Activated CD4-positive, alpha-beta T cell treated with anti-CD3 and anti-CD28 coated beads, Interleukin-2, amount 10 ng/mL, durations not matched to agents 24 days and 14 days (primary cell): ENCODE measurements at regions of chr14 and their contacts with region 1.

Region 1: DNA sequence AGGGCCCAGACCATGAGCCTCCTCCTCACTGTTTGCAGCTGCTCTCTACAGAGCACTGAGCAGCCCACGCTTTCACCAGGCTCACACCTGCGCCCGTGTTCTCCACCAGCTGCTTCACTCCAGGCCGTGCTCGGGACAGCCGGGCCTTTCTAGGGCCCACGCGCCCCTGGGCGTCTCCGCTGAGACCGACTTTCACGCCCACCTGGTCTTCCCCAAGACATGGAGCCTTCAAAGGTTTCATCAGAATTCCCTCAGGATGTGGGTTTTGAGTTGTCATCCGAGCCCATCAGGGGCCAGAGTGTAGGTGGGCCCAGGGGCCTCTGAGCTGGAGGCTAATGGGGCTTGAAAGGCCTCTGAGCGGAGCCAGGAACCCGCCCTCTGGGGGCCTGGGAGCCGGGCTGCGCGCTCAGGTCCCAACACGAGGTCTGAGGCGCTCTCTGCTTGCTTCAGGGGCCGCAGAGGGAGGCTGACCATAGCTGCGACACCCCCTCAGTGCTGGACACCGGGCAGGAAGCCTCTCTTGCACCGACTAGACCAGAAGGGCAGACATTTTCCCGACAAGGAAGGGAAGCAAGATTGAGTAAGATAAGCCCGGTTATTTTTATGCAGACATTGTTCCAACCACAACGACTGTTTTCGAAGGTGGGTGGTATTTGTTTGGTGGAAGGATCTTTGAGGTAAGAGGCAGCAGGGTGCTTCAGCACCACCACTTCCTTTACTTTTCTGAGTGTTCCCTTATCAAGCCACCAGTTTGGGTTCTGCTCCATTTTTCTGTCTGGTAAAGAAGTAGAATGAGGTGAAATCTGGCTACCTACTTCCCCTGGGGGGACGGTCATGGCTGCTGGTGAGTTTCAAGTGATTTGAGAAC is 125.0 kb upstream of the FUT8 start:
- DNase-seq: peak; percentile 89
- H3K4me3 Mint-ChIP-seq: peak overlapping the region; percentile 78
- H3K27ac Mint-ChIP-seq: peak overlapping the region; percentile 98
- H3K4me1 Mint-ChIP-seq: peaks cover 66% of the 10 kb centered on the region
- H3K27me3 Mint-ChIP-seq: no peaks in the 10 kb centered on the region

Region 2: GRCh38 chr14:65170768-65171507 is 116.6 kb before region 1 on chr14:
- intact Hi-C with region 1: loop called (anchors 1 kb)
- DNase-seq: peak; percentile 88
- H3K4me3 Mint-ChIP-seq: peak overlapping the region; percentile 78
- H3K27ac Mint-ChIP-seq: peak overlapping the region; percentile 82
- H3K4me1 Mint-ChIP-seq: peaks cover 36% of the 10 kb centered on the region
- H3K27me3 Mint-ChIP-seq: peaks cover 3% of the 10 kb centered on the region

Region 3: DNA sequence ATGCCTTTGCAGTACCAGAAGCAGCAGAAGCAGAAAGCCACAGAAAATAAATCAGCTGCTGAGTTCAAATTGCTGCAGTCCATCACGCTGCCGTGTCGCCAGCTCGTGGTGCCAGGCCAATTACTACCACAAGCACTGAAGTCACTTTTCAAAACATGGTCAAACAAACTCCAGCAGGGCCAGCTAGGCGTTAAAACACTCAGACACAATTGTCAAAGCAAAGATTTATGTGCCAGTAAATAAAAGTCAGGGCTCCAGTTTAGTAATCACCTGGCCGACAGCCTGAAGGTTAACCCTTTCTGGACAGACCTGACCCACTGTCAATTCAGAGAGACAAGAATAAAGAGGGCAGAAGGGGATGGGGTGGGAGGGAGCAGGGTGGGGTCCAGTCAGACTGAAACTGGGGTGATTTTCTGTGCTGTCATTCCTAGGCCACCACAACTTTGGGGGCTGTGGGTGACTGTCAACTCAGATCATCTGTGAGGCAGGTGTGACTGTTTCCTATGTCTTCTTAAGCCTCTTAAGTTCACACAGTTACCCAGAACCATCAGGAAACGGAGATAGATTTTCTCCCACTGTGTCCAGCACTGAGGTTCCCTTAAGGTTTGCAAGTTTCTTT is 15.2 kb after region 1 on chr14:
- intact Hi-C with region 1: loop called (anchors 1 kb)
- DNase-seq: peak; percentile 82
- H3K4me3 Mint-ChIP-seq: peak overlapping the region; percentile 62
- H3K27ac Mint-ChIP-seq: peak overlapping the region; percentile 97
- H3K4me1 Mint-ChIP-seq: peaks cover 67% of the 10 kb centered on the region
- H3K27me3 Mint-ChIP-seq: no peaks in the 10 kb centered on the region

Region 4: GRCh38 chr14:65356327-65356852 is 68.9 kb after region 1 on chr14:
- intact Hi-C with region 1: loop called (anchors 1 kb)
- DNase-seq: peak; percentile 77
- H3K4me3 Mint-ChIP-seq: peak overlapping the region; percentile 34
- H3K27ac Mint-ChIP-seq: peak overlapping the region; percentile 78
- H3K4me1 Mint-ChIP-seq: peaks cover 61% of the 10 kb centered on the region
- H3K27me3 Mint-ChIP-seq: no peaks in the 10 kb centered on the region

Region 5: DNA sequence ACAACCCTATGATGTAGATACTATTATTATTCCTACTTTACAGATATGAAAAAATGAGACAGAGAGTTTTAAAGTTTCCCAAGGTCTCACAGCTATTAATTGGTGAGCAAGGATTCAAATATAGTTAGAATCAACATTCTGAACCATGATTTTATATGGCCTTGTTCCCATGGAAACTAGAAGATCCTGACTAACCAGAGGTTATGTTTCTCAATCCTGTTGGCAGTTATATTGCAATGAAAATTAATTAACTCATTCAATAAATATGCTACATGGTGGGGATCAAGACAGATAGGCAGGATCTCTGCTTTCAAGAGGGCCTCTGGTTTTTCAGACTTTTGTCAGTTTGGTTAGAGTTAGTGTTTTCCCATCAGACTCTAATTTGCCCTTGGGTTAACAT is 115.7 kb after region 1 on chr14:
- intact Hi-C with region 1: no loop called
- DNase-seq: no peak
- H3K4me3 Mint-ChIP-seq: no peak overlapping the region
- H3K27ac Mint-ChIP-seq: no peak overlapping the region
- H3K4me1 Mint-ChIP-seq: peaks cover 9% of the 10 kb centered on the region
- H3K27me3 Mint-ChIP-seq: no peaks in the 10 kb centered on the region

Region 6: GRCh38 chr14:65462411-65462810 is 174.9 kb after region 1 on chr14:
- intact Hi-C with region 1: loop called (anchors 1 kb)
- DNase-seq: no peak
- H3K4me3 Mint-ChIP-seq: peak overlapping the region; percentile 12
- H3K27ac Mint-ChIP-seq: peak overlapping the region; percentile 68
- H3K4me1 Mint-ChIP-seq: peaks cover 38% of the 10 kb centered on the region
- H3K27me3 Mint-ChIP-seq: no peaks in the 10 kb centered on the region

Region 7: DNA sequence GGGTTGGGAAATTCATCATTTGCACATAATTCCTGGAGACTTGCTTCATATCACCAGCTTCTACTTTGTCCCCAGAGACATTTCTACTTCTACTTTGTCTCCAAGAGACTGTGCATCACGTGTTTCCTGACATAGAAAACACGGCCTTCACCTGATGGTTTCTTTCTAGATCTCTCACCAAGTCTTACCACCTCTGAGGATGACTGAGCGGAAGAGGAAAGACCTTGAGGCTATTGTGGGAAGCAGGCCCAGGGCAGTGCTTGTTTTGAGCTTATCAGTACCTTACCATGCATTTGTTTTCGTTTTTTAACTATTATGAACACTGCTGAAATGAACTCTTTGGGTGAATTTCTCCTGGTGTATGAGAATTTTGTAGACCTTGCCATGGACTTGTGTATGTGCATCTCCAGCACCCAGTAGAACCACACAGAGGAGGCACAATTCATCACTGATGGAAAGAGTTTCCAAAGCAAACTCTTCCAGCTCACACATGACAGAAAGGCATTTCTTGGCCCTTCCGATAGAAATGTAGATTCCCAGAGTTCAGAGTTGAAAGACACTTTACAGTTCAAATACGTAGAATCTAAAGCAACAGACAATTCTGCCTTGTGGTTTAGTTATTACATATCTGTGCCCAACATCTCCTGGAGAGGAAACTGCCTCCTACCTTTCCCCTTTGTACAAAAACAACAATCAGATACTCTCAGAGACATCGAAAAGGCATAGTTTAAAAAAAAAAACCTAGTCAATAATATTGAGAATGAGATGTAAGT is 559.8 kb after region 1 on chr14:
- intact Hi-C with region 1: loop called (anchors 5 kb)
- DNase-seq: peak; percentile 95
- H3K4me3 Mint-ChIP-seq: peak overlapping the region; percentile 71
- H3K27ac Mint-ChIP-seq: peak overlapping the region; percentile 87
- H3K4me1 Mint-ChIP-seq: peaks cover 67% of the 10 kb centered on the region
- H3K27me3 Mint-ChIP-seq: no peaks in the 10 kb centered on the region